ENCODE measurements at regions of chr16 and their contacts with region 1.

Region 1: DNA sequence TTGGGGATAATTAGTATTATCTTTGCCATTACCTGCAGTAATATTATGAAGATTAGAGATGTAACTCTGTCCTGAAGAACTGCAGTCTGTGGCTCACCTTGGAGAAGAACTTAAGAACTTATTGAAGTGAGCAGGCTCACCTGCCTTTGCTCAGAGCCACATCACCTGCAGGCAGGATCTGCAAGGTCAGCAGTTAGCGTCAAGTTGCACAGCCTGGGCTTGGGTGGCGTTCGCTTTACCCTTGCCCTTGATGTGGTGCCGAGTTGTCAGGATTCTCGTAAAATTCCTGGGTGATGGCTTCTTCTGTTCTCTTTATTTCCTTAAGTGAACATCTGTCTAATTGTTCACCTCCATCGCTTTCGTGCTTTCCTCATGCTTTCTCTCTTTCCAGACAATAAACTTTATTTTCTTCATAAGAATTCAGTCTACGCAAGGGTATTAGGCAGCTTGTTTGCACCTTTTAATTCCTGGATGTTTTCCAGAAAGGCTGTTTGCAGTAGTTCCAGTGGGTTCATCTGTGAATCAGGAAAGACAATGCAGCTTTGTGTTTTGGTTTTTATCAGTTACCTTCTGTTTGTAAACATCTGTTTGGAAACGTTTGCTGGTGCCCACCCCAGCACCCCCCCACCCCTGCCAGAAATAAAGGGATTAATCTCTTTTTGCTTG is 254.3 kb downstream of the WWOX start:
- DNase-seq: no peak
- H3K4me3 Mint-ChIP-seq: no peak overlapping the region
- H3K27ac Mint-ChIP-seq: no peak overlapping the region
- H3K4me1 Mint-ChIP-seq: no peaks in the 10 kb centered on the region
- H3K27me3 Mint-ChIP-seq: no peaks in the 10 kb centered on the region

Region 2: DNA sequence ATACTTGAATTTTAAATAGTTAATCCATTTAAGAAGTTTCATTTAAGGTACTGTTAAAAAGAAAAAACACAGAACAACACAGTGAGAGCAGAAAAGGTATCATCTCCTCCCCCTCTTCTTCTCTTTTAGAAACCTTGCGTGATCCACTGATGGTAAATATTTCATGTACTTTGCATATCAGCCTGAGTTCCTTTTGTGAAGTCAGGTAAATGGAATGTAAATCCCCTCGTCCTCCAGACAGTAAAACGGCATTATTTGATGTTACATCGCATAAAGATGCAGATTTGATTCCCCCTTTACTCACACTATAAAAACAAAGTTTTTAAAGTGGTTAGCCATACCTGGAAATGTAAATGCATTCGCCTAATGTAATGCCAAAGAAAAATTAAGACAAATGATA is 19.9 kb before region 1 on chr16:
- intact Hi-C with region 1: loop called (anchors 1 kb)
- DNase-seq: no peak
- H3K4me3 Mint-ChIP-seq: no peak overlapping the region
- H3K27ac Mint-ChIP-seq: no peak overlapping the region
- H3K4me1 Mint-ChIP-seq: no peaks in the 10 kb centered on the region
- H3K27me3 Mint-ChIP-seq: no peaks in the 10 kb centered on the region